GM23248 (cell line): ENCODE measurements at regions of chr2 and their contacts with region 1.

Region 1: GRCh38 chr2:197209742-197210408 is 100.7 kb downstream of the ANKRD44 start:
- DNase-seq: no peak
- H3K4me3 ChIP-seq: no peak overlapping the region
- H3K27ac ChIP-seq: no peak overlapping the region
- H3K4me1 ChIP-seq: peaks cover 13% of the 10 kb centered on the region
- H3K27me3 ChIP-seq: no peaks in the 10 kb centered on the region

Region 2: GRCh38 chr2:197293252-197294007 is 83.6 kb after region 1 on chr2:
- in situ Hi-C with region 1: loop called (anchors 10 kb)
- DNase-seq: no peak
- H3K4me3 ChIP-seq: no peak overlapping the region
- H3K27ac ChIP-seq: no peak overlapping the region
- H3K4me1 ChIP-seq: 0 out of 2 replicates have a peak, but pooled peaks cover 8% of the 10 kb centered on the region
- H3K27me3 ChIP-seq: no peaks in the 10 kb centered on the region

Region 3: GRCh38 chr2:199019898-199020507 is 1810.1 kb after region 1 on chr2:
- in situ Hi-C with region 1: no loop called
- DNase-seq: peak; percentile 72
- H3K4me3 ChIP-seq: no peak overlapping the region
- H3K27ac ChIP-seq: no peak overlapping the region
- H3K4me1 ChIP-seq: no peaks in the 10 kb centered on the region
- H3K27me3 ChIP-seq: no peaks in the 10 kb centered on the region